K562 (cell line): ENCODE measurements at regions of chr9 and their contacts with region 1.

Region 1: DNA sequence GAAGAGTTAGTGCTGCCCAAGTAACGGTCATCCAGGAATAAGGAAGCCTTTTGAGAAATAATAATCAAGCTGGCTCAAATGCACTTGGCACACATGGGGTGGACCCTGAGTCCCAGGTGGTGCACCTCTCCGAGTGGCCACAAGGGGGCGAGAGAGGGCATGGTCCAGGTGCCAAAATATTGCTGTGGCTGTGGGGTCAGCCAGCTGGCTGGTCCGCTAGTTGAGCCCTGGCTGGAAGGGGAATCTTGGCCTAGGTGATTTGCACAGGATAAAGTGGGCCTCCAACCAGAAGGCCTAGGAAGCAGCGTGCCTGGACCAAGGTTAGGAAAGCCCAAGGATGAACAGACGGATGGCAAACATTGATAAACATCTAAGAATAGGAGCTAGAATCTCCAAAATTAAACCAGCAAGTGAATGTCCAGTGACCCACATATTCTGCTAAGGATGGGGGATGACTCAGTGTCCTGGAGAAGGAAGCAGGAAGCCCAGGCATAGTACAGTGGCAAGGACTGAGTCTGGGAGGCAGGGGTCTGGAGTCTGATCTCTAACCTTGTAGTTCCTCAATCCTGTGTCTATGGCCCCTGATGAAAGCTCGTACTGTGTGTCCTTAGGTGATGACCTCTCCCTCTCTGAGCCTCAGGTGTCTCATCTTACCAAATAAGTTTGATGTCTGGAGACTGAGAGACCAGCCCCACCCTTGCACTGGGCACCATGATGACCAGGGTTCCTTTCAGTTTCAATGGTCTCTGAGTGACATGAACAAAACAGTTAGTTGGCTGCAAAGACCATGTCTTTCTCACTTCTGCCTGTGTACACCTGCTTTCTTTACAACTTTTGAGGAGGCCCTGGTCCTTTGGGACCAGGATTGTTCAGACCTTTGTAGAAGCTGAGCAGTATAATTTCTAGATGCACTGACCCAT is 19.2 kb upstream of the SHB start:
- DNase-seq: peak; percentile 81 to 89 (median 86)
- ATAC-seq: peak; percentile 93
- H3K4me3 ChIP-seq: no peak overlapping the region
- H3K27ac ChIP-seq: no peak overlapping the region
- H3K4me1 ChIP-seq: no peaks in the 10 kb centered on the region
- H3K27me3 ChIP-seq: peaks cover 8 to 13% of the 10 kb centered on the region in 2 experiments; a peak in 4 of 5 replicates
- CTCF ChIP-seq: peak; percentile 94 to 99 (median 94)
- EP300 ChIP-seq: no peak
- POLR2A ChIP-seq: no peak
- RAD21 ChIP-seq: peak; percentile 76 to 92

Region 2: DNA sequence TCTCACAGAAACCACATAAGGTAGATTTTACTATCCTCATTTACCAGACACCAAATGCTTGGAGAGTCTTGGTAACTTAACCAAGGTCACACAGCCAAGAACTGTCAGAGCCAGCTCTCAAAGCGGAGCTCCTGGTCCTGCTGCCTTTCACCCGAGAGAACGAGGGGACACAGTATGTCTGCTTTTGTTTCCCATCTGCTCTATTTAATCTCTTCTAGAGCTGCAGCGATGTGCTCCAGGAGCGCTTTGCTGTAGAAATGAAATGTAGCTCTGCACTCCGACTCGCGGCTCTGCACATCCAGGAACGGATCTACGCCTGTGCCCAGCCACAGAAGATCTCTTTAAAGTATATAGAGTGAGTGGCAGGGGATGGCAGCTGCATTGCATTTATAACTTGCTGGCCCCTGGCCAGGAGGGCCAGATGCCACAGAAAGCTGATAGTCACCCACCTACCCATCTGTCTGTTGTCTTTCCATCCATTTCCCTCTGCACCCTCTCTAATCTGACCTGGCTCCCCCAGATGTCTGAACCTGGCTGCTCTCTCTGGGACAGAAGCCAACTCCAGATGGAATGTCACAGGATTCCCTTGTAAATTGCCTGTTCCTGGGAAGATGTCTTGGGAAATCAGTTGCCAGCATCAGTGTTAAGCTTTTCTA is 356.1 kb before region 1 on chr9:
- CTCF ChIA-PET with region 1: no interaction called
- POLR2A ChIA-PET with region 1: no interaction called
- in situ Hi-C with region 1: no loop called
- intact Hi-C with region 1: no loop called
- DNase-seq: no peak
- ATAC-seq: no peak
- H3K4me3 ChIP-seq: no peak overlapping the region
- H3K27ac ChIP-seq: no peak overlapping the region
- H3K4me1 ChIP-seq: no peaks in the 10 kb centered on the region
- H3K27me3 ChIP-seq: peaks cover 64 to 76% of the 10 kb centered on the region in 2 experiments
- CTCF ChIP-seq: no peak
- EP300 ChIP-seq: no peak
- POLR2A ChIP-seq: no peak
- RAD21 ChIP-seq: no peak

Region 3: GRCh38 chr9:37972351-37972848 is 115.9 kb before region 1 on chr9:
- CTCF ChIA-PET with region 1: no interaction called
- POLR2A ChIA-PET with region 1: interaction called, 4 read pairs
- in situ Hi-C with region 1: no loop called
- intact Hi-C with region 1: loop called (anchors 5 kb)
- DNase-seq: peak in 1 of 4 experiments; percentile 34
- ATAC-seq: peak; percentile 62
- H3K4me3 ChIP-seq: no peak overlapping the region
- H3K27ac ChIP-seq: no peak overlapping the region
- H3K4me1 ChIP-seq: peaks cover 15 to 25% of the 10 kb centered on the region in 2 experiments
- H3K27me3 ChIP-seq: no peaks in the 10 kb centered on the region
- CTCF ChIP-seq: peak; percentile 15 to 38 (median 30); a peak in 4 of 6 replicates
- EP300 ChIP-seq: no peak
- POLR2A ChIP-seq: no peak
- RAD21 ChIP-seq: peak in 1 of 2 experiments; percentile 27; a peak in 2 of 4 replicates

Region 4: GRCh38 chr9:38127271-38127882 is 39.1 kb after region 1 on chr9:
- CTCF ChIA-PET with region 1: no interaction called
- POLR2A ChIA-PET with region 1: no interaction called
- in situ Hi-C with region 1: no loop called
- intact Hi-C with region 1: no loop called
- DNase-seq: peak in 3 of 4 experiments; percentile 24 to 52 (median 31)
- ATAC-seq: peak; percentile 34; the same call in 1 of the 3 replicates
- H3K4me3 ChIP-seq: no peak overlapping the region
- H3K27ac ChIP-seq: no peak overlapping the region
- H3K4me1 ChIP-seq: peaks cover 6 to 19% of the 10 kb centered on the region in 2 experiments; a peak in 3 of 5 replicates
- H3K27me3 ChIP-seq: peaks cover 43 to 53% of the 10 kb centered on the region in 2 experiments
- CTCF ChIP-seq: no peak
- EP300 ChIP-seq: no peak
- POLR2A ChIP-seq: no peak
- RAD21 ChIP-seq: no peak

Region 5: DNA sequence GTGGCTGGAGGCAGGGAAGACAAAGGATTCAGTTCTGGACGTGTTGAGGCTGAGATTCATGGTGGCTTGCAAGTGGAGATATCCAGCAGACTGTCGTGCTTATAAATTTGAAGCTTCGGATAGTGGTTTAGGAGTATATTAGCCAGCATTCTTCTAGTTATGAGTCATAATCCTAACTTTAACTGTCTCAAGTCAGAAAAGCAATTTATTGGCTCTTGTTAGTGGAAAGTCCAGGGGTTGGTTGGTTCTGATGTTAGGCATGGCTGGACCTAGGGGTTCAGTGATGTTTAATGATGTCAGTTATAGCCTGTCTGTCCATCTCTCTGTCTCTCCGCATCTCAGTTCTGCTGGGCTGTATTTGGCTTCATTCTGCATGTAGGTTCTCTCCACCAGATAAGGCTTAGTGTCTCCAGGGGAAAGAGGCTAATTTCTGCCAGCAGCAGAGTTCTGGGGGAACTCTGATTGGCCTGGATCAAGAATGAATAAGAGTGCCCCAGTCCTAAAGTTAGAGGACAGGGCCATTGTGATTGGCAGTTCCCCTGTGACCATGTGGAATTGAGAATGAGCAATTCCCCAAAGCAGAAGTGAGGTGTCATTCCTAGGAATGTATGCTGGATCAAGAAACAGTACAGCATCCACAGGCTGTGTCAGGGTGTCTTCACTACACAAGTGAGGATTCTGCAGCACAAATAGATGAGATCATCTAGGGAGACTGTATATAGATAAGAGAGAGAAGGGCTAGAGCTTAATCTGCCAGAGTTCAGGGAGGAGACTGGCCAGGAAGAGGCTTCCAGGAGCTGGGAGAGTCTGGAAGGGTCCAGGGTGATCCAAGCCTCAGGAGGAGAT is 53.7 kb after region 1 on chr9:
- CTCF ChIA-PET with region 1: no interaction called
- POLR2A ChIA-PET with region 1: no interaction called
- in situ Hi-C with region 1: no loop called
- intact Hi-C with region 1: no loop called
- DNase-seq: no peak
- ATAC-seq: no peak
- H3K4me3 ChIP-seq: no peak overlapping the region
- H3K27ac ChIP-seq: no peak overlapping the region
- H3K4me1 ChIP-seq: no peaks in the 10 kb centered on the region
- H3K27me3 ChIP-seq: peaks cover 39 to 55% of the 10 kb centered on the region in 2 experiments
- CTCF ChIP-seq: no peak
- EP300 ChIP-seq: no peak
- POLR2A ChIP-seq: no peak
- RAD21 ChIP-seq: no peak

Region 6: DNA sequence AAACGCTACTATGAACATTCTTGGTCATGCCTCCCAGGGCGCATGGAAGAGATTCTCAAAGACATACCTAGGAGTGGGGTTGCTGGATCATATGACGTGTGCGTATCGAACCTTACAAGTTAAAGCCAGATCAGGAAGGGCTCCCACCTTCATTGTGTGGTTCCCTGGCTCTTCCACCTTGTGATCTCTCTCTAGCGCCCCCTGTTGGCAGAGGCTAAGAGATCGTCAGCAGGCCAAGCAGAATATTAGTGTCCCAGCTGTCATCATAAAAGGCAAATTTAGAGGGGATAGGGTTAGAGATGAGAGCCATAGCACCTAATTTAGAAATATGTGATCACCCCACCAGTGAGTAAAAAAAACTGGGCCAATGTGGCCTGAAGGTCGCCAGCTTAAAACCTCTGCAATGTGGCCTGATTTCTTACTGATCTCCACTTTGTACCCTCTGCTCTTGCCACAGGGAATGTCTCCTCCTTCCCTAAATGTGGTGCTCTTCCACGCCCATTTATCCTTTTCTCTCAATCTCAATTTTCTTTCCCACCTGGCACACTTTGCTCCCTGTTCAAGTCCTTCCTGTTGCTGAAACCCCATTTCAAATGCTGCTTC is 72.4 kb after region 1 on chr9:
- CTCF ChIA-PET with region 1: interaction called, 4 read pairs
- POLR2A ChIA-PET with region 1: no interaction called
- in situ Hi-C with region 1: no loop called
- intact Hi-C with region 1: loop called (anchors 2 kb)
- DNase-seq: peak; percentile 79 to 89 (median 86)
- ATAC-seq: peak; percentile 94
- H3K4me3 ChIP-seq: no peak overlapping the region
- H3K27ac ChIP-seq: no peak overlapping the region
- H3K4me1 ChIP-seq: no peaks in the 10 kb centered on the region
- H3K27me3 ChIP-seq: peaks cover 4 to 26% of the 10 kb centered on the region in 2 experiments; a peak in 4 of 5 replicates
- CTCF ChIP-seq: peak; percentile 88 to 92 (median 91)
- EP300 ChIP-seq: no peak
- POLR2A ChIP-seq: no peak
- RAD21 ChIP-seq: peak; percentile 75 to 82

Region 7: DNA sequence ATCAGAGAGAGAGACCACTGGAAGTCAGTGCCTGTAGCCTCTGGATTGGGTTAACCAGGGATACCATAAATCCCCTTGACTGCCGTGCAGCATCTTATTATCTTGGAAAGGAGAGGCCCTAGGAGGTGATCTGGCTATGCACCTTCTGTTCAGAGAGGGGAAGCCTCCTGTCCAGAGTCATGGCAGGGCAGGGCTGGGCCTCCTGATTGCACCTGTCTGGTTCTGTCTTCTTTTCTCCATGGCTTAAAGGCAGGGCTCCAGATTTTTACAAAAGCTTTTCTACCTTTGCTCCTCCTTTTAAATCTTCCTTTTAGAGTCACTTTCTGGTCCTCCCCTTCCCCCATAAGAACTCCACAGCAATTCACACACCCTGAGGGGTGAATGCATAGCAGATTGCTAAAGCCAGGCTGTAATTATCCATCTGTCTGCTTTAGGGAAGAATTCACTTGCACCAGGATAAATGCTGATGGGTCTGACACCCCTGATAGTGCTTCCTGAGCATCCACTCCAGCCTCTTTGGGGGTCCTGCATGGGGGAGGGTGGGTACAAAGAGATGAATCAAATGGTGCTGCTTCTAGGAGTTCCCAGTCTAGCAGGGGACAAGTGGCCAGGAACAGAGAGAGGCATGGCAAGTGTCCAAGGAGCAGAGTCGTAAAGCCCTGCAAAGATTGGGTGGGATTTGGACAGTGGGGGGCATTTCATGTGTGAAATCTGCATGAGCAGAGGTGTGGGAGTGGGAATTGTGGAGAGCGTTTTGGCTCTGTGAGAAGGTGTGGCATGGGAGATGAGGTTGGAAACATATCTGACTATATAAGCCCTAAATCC is 163.0 kb after region 1 on chr9:
- CTCF ChIA-PET with region 1: no interaction called
- POLR2A ChIA-PET with region 1: no interaction called
- in situ Hi-C with region 1: no loop called
- intact Hi-C with region 1: loop called (anchors 10 kb)
- DNase-seq: no peak
- ATAC-seq: no peak
- H3K4me3 ChIP-seq: no peak overlapping the region
- H3K27ac ChIP-seq: no peak overlapping the region
- H3K4me1 ChIP-seq: no peaks in the 10 kb centered on the region
- H3K27me3 ChIP-seq: peaks cover 15 to 38% of the 10 kb centered on the region in 2 experiments
- CTCF ChIP-seq: no peak
- EP300 ChIP-seq: no peak
- POLR2A ChIP-seq: no peak
- RAD21 ChIP-seq: no peak

Region 8: GRCh38 chr9:38263532-38263931 is 175.3 kb after region 1 on chr9:
- CTCF ChIA-PET with region 1: interaction called, 10 read pairs
- POLR2A ChIA-PET with region 1: no interaction called
- in situ Hi-C with region 1: no loop called
- intact Hi-C with region 1: loop called (anchors 10 kb)
- DNase-seq: no peak
- ATAC-seq: no peak
- H3K4me3 ChIP-seq: no peak overlapping the region
- H3K27ac ChIP-seq: no peak overlapping the region
- H3K4me1 ChIP-seq: no peaks in the 10 kb centered on the region
- H3K27me3 ChIP-seq: no peaks in the 10 kb centered on the region; a peak in 1 of 5 replicates
- CTCF ChIP-seq: peak; percentile 27 to 55 (median 35); a peak in 3 of 6 replicates
- EP300 ChIP-seq: no peak
- POLR2A ChIP-seq: no peak
- RAD21 ChIP-seq: peak; percentile 51 to 81

Region 9: DNA sequence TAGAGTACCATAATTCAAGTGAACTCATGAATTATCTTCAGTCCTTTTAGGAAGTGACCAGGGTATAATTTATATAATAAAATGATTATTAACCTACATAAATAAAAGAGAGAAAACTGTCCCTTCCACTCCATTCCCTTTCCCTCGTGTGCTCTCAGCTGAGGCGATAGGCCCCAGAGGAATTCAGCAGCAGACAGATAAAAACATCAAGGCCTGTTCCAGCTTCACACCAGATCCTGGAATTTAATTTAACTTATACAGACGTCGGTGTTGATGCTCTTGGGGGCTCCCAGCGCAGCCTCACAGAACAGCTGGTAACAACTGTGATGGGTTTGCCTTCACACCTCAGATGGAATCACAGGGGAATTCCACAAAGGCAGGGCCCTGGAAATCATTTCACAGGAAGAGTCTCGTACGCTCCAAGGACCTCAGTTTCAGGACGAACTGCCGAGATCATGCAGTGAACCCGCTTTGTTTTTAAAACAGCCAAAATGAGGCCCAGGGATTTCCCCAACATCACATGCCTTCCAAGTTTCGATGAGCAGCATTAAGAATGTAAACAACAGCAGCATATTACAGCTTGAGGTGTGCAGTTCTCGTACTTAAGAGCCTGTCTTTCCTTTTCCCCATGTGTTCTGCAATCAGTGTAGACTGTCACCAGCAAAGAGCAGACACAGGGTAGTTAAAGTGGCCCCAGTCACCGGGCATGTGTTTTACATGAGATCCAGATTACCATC is 230.7 kb after region 1 on chr9:
- CTCF ChIA-PET with region 1: no interaction called
- POLR2A ChIA-PET with region 1: no interaction called
- in situ Hi-C with region 1: no loop called
- intact Hi-C with region 1: no loop called
- DNase-seq: no peak
- ATAC-seq: no peak
- H3K4me3 ChIP-seq: no peak overlapping the region
- H3K27ac ChIP-seq: no peak overlapping the region
- H3K4me1 ChIP-seq: no peaks in the 10 kb centered on the region; a peak in 1 of 5 replicates
- H3K27me3 ChIP-seq: peaks cover 17 to 33% of the 10 kb centered on the region in 2 experiments
- CTCF ChIP-seq: no peak
- EP300 ChIP-seq: no peak
- POLR2A ChIP-seq: no peak
- RAD21 ChIP-seq: no peak

Region 10: DNA sequence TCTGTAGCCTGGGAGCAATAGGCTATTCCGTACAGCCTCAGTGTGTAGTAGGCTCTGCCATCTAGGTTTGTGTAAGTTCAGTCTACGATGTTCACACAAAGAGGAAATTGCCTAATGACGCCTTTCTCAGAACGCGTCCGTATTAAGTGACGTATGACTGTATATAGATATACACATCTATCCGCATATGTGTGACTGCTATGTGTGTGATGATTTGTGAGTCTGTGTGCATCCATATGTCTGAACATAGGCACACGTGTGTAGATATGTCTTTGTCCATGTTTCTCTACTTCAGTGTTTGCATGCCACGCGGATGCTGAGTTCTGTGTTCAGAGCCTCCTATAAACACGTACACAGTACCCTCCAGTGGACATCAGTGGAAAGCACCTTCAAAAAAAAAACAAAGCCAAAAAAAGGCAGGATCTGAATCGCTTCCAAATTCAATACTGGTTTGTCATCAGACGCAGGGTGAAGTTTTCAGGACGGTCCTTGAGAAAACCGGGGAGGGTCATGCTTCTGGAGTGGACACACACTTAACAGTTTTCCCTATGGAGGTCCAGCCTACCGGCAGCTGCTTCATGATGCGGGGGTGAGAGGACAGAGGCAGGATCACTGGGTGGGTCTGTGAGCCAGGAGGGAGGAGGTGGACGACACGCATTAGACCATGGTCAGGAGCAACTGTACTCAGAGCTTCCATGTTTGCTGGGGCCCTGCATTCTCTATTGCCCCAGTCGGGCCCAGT is 274.8 kb after region 1 on chr9:
- CTCF ChIA-PET with region 1: interaction called, 9 read pairs
- POLR2A ChIA-PET with region 1: interaction called, 3 read pairs
- in situ Hi-C with region 1: no loop called
- intact Hi-C with region 1: loop called (anchors 5 kb)
- DNase-seq: peak; percentile 25 to 62 (median 46)
- ATAC-seq: peak; percentile 82
- H3K4me3 ChIP-seq: no peak overlapping the region
- H3K27ac ChIP-seq: no peak overlapping the region
- H3K4me1 ChIP-seq: peaks cover 0 to 4% of the 10 kb centered on the region in 2 experiments; a peak in 2 of 5 replicates
- H3K27me3 ChIP-seq: peaks cover 16 to 27% of the 10 kb centered on the region in 2 experiments
- CTCF ChIP-seq: peak; percentile 69 to 91 (median 86)
- EP300 ChIP-seq: no peak
- POLR2A ChIP-seq: no peak
- RAD21 ChIP-seq: peak; percentile 83 to 88